Vagina (tissue), 2 donors: ENCODE measurements at regions of chr2 and their contacts with region 1.

Region 1: DNA sequence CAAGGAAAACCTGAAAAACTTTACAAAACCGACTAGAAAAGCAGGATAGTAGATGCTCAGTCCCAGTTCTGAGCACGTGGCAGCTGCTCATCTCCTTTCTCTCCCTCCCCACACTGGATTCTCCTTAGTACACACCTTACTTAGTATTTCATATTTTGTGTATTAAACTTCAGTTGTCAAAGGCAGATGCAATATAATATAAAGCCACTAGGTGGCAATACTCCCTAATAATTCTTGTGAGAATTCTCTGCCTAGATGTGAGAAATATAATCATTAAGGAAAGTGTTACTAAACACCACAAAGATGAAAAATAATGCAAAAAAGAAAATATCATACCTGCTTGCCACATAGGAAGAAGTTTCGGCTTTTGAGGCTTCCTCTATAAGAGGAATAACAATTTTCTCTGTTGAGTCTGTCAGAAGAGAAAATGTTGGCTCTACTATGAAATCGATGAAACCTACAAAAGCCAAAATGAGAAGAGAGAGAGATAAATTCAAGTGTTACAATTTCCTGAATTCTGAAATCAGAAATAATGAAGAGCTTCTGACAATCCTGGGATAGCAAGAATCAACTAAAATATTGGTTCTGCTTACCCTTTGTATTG is 200.6 kb downstream of the PPP1R1C start:
- DNase-seq: no peak
- H3K4me3 ChIP-seq: no peak overlapping the region
- H3K27ac ChIP-seq: no peak overlapping the region
- H3K4me1 ChIP-seq: no peaks in the 10 kb centered on the region
- H3K27me3 ChIP-seq: no peaks in the 10 kb centered on the region
- CTCF ChIP-seq: peak; percentile 62 to 88 (median 81)
- POLR2A ChIP-seq: no peak

Region 2: DNA sequence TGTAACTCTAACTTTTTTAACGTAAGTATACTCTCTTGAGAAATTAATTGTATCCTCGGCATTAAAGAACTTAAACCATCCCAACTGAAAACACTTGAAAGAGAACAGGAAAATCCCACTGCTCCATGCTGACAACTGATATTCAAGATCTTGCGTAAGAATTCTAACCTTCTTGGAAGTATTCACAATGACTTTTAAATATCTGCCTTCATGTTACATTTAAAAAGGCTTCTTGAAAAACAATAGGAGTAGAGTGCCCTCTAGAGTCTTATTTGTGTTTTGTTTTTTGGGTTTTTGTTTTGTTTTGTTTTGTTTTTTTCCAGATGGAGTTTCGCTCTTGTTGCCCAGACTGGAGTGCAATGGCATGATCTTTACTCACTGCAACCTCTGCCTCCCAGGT is 464.5 kb after region 1 on chr2:
- intact Hi-C with region 1: loop called (anchors 5 kb)
- DNase-seq: no peak
- H3K4me3 ChIP-seq: no peak overlapping the region
- H3K27ac ChIP-seq: no peak overlapping the region
- H3K4me1 ChIP-seq: no peaks in the 10 kb centered on the region
- H3K27me3 ChIP-seq: no peaks in the 10 kb centered on the region
- CTCF ChIP-seq: peak; percentile 17 to 73 (median 68)
- POLR2A ChIP-seq: no peak